Heart right ventricle (tissue), 16 donors: ENCODE measurements at regions of chrX and their contacts with region 1.

Region 1: GRCh38 chrX:24024819-24025740 is 1.9 kb downstream of the KLHL15 start:
- DNase-seq: peak; percentile 88 to 89
- ATAC-seq: peak; percentile 94 to 98 (median 95)
- H3K4me3 ChIP-seq: peak overlapping the region; percentile 66 to 94 (median 80)
- H3K27ac ChIP-seq: peak overlapping the region; percentile 93 to 97 (median 96)
- H3K4me1 ChIP-seq: peaks cover 0 to 15% (median 4%) of the 10 kb centered on the region in 9 donors
- H3K27me3 ChIP-seq: peaks cover 0 to 88% (median 0%) of the 10 kb centered on the region in 7 donors
- CTCF ChIP-seq: peak in 6 of 9 donors; percentile 17 to 50 (median 34)

Region 2: DNA sequence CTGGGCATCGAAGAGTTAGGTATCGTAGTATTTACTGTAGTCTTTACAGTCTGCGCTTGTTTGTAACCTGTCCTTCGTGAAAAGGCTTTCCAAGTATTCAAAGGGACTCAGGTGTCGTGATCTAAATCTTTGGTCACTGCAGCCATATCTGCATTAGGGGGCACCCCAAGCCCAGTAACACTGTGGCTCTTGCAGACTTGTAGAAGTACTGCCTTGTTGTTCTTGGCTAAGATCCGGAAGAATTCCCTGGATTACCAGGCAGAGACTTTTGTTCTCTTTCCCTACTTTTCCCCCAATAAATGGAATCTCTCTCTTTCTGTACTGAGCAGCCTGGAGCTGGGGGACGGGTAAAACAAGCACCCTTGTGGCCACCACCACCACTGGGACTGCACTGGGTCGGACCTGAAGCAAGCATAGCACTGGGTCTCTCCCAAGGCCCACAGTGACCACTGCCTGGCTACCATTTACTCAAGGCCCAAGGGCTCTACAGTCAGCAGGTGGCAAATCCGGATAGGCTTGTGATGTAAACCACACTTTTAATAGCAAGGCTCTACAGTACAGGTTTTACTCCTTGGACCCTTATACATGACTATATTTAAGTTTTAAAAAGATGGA is 105.3 kb before region 1 on chrX:
- intact Hi-C with region 1: loop called in 1 of 10 experiments (anchors 10 kb)
- DNase-seq: no peak
- ATAC-seq: no peak
- H3K4me3 ChIP-seq: no peak overlapping the region
- H3K27ac ChIP-seq: no peak overlapping the region
- H3K4me1 ChIP-seq: no peaks in the 10 kb centered on the region
- H3K27me3 ChIP-seq: peaks cover 0 to 72% (median 0%) of the 10 kb centered on the region in 7 donors
- CTCF ChIP-seq: peak in 2 of 9 donors; percentile 6 to 13

Region 3: GRCh38 chrX:24054182-24055042 is 29.3 kb after region 1 on chrX and contains the start of gene EIF2S3:
- intact Hi-C with region 1: loop called in 3 of 10 experiments (anchors 1 kb)
- DNase-seq: peak; percentile 80 to 88
- ATAC-seq: peak; percentile 96 to 99 (median 98)
- H3K4me3 ChIP-seq: peak within 1 kb of the TSS in 4 of 10 donors; percentile 77 to 89 (median 84)
- H3K27ac ChIP-seq: peak within 1 kb of the TSS; percentile 83 to 96 (median 92)
- H3K4me1 ChIP-seq: peaks cover 0 to 11% (median 0%) of the 10 kb centered on the region in 9 donors
- H3K27me3 ChIP-seq: peaks cover 0 to 24% (median 0%) of the 10 kb centered on the region in 7 donors
- CTCF ChIP-seq: peak; percentile 35 to 83 (median 74)
- total RNA-seq, gene EIF2S3: 68.7 to 104 (median 80.6) TPM